ENCODE measurements at regions of chr22 and their contacts with region 1.

Region 1: GRCh38 chr22:28009272-28009827 is 90.3 kb upstream of the PITPNB start:
- DNase-seq: peak; percentile 35
- H3K4me3 ChIP-seq: no peak overlapping the region
- H3K27me3 ChIP-seq: no peaks in the 10 kb centered on the region
- CTCF ChIP-seq: peak; percentile 96

Region 2: DNA sequence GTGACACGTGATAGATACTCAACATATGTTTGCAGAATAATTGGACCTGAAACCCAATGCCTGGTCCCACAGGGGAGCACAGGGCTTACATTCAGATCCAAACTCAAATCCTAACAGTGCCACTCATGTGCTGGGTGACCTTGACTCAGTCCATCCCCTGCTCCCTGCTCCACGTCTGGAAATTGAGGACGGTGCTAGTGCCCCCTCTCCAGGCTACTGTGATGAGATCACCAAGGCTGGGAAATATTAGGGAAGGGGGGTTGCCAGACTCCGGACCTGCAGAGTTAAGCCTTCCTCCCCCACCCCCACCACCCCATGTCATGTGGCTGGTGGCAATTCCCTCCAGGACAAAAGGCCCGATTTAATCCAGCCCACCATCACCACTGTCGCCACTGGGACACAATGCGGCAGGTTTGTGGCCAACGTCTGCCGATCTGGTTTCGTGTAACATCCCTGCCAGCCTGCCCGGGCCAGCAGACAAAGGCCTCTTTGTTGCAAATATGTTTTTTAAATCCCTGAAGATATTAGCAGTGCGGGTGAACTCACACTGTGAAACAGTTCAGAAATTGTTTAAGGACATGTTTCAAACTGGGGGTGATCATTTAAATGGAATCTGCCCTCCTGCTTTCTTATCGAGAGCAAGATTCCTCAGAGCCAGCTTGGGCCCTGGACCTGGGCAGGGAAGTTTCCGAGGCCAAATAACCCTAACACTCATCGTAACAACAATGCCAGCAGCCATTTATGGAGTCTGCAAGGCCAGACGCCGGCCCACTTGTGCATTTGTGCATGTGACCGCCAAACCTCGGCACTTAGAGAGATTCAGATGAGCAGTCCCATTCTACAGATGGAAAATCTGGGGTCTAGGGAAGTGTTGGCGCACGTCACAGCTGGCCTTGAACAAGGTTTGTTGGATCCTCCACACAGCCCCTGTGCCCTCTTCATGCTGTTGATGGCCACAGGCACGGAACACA is 188.2 kb before region 1 on chr22:
- CTCF ChIA-PET with region 1: no interaction called
- POLR2A ChIA-PET with region 1: no interaction called
- DNase-seq: no peak
- H3K4me3 ChIP-seq: no peak overlapping the region
- H3K27me3 ChIP-seq: 0 out of 2 replicates have a peak, but pooled peaks cover 1% of the 10 kb centered on the region
- CTCF ChIP-seq: no peak

Region 3: GRCh38 chr22:27997538-27997937 is 11.8 kb before region 1 on chr22:
- CTCF ChIA-PET with region 1: interaction called, 15 read pairs
- POLR2A ChIA-PET with region 1: no interaction called
- DNase-seq: no peak
- H3K4me3 ChIP-seq: no peak overlapping the region
- H3K27me3 ChIP-seq: no peaks in the 10 kb centered on the region
- CTCF ChIP-seq: no peak

Region 4: DNA sequence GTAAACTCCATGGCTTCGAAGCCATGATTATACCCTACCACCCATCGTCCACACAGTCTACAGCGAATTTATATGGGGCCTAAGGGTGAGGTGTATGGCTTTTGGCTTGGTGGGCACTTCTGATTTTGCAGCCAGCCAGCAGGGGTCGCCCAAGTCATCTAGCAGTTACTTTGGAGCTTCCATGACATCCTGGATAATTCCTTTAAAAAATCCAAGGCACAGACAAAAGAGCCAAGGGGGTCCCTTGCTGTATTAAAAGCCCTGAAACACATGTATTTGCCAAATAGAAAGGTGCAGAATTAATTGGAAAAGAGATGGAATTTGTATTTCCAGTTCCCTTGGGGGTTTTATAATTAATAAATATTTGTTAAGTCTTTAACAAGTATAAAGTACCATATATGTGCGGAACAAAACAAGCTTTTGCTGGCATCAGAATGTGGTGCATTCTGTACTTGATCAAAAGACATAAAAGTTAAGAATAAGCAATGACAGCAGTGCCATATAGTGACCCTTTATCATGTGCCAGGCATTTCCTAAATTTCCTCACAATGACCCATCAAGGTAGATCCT is 42.5 kb after region 1 on chr22:
- CTCF ChIA-PET with region 1: no interaction called
- POLR2A ChIA-PET with region 1: no interaction called
- DNase-seq: no peak
- H3K4me3 ChIP-seq: no peak overlapping the region
- H3K27me3 ChIP-seq: no peaks in the 10 kb centered on the region
- CTCF ChIP-seq: peak; percentile 93

Region 5: GRCh38 chr22:28094771-28095170 is 85.4 kb after region 1 on chr22:
- CTCF ChIA-PET with region 1: no interaction called
- POLR2A ChIA-PET with region 1: no interaction called
- DNase-seq: no peak
- H3K4me3 ChIP-seq: no peak overlapping the region
- H3K27me3 ChIP-seq: no peaks in the 10 kb centered on the region
- CTCF ChIP-seq: no peak

Region 6: GRCh38 chr22:28283068-28283654 is 273.8 kb after region 1 on chr22:
- CTCF ChIA-PET with region 1: no interaction called
- POLR2A ChIA-PET with region 1: no interaction called
- DNase-seq: no peak
- H3K4me3 ChIP-seq: no peak overlapping the region
- H3K27me3 ChIP-seq: no peaks in the 10 kb centered on the region
- CTCF ChIP-seq: no peak